MCF 10A (cell line): ENCODE measurements at regions of chr9 and their contacts with region 1.

Region 1: DNA sequence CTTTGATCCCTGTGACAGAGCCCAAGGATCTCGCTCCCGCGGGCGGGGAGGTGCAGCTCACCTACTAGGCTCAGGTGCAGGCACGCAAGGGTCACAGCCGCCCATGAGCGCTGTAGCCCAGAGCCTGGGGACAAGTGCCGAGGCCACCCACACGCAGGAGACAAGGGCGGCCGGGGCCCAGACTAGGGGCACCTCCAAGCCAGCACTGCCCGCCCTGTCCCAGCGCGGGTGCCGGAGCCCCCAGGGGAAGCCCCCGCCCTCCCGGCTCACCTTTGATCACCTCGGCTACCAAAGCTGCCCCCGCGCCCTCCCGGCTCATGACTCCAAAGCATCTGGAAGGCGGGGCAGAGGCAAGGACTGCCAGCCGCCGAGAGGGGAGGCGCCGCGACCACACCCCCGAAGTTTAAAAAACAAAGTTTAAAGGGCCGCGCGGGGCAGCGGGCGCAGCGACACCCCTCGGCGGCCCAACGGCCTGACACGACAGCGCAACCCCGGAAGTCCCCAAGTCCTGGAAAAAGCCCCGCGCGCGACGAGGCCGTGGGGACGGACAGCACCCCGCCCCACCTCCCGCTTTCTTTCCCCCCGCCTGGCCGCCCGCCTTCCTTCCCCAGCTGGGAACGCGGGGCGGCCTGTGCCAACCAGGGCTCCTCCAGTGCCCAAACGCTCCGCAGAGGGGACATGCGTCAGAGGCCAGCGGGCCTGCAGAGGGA is 53.0 kb downstream of the CDC14B start:
- DNase-seq: peak; percentile 63
- H3K4me3 Mint-ChIP-seq: peak overlapping the region; percentile 80
- H3K27ac Mint-ChIP-seq: peak overlapping the region; percentile 84
- H3K4me1 Mint-ChIP-seq: peaks cover 6% of the 10 kb centered on the region
- H3K27me3 Mint-ChIP-seq: no peaks in the 10 kb centered on the region
- CTCF ChIP-seq: peak; percentile 49

Region 2: DNA sequence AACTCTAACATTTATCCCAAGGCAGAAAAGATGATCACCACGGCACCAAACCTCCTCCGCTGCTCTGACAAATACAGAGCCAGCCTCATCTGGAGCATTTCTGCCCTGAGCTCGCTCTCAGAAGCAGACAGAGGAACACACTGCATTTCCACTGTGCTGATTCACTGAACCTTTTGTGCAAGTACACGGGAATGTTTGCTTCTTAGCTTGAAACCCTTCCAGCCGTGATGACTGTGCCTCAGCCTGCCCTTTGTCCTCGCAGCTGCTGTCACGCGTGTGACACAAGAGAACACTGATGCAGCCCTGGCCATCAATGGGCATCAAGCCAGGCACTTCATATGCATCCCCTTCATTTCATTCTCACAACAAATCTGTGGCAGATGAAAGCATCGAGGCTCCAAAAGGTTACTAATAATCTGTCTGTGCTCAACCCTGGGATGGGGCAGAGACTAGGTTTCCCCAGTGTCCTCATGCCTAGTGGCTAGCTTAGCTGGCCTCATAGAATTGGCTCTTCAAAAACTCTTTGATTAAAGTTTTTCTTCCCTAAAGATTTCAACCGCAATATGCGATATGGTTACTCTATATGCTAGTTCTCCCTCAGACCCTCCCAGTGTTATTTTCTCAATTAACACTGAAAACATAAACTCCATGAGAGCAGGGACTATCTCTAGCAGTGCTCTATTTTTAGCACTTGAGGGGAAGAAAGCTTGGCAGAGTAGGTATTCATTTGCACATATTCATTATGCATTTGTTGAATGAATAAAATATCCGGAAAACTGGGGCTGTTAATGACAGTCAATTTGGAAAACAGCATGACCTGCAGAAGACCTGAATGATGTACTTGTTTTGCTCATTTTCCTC is 45.7 kb after region 1 on chr9:
- CTCF ChIA-PET with region 1: interaction called, 8 read pairs
- POLR2A ChIA-PET with region 1: interaction called, 12 read pairs
- intact Hi-C with region 1: no loop called
- DNase-seq: peak; percentile 62
- H3K4me3 Mint-ChIP-seq: peak overlapping the region; percentile 13
- H3K27ac Mint-ChIP-seq: peak overlapping the region; percentile 23
- H3K4me1 Mint-ChIP-seq: peaks cover 22% of the 10 kb centered on the region
- H3K27me3 Mint-ChIP-seq: no peaks in the 10 kb centered on the region
- CTCF ChIP-seq: no peak

Region 3: DNA sequence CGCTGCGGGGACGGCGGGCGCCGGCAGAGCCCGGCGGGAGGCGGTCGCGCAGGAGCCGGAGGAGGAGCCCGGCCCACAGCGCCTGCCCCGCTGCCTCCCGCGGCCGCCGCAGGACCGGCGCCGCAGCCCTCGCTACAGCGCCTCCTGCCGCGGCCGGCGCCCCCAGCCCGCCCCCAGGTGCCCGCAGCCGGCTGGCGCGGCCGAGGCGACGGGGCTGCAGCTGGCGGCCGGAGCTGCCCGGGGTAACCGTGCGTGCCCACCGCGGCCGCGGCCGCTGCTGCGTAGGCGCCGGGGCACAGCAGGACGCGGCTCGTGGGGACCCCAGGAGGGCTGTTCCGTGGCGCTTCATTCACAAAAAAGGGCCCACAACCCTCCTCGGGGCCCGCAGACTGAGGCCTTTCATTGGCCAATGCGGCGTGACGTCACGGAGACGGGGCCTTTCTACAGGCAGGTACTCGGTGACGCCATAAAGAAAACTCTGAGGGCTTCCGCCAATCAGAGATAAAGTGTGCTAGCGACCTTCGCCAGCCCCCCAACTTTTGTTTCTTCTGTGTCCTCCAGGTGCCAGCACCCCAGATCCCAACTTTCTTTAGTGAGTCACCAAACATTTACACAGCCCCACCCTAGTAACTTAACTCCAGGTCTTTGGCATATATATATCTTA is 53.0 kb after region 1 on chr9 and contains the start of gene CDC14B:
- CTCF ChIA-PET with region 1: interaction called, 6 read pairs
- POLR2A ChIA-PET with region 1: interaction called, 11 read pairs
- intact Hi-C with region 1: loop called (anchors 1 kb)
- DNase-seq: peak; percentile 91
- H3K4me3 Mint-ChIP-seq: peak within 1 kb of the TSS; percentile 76
- H3K27ac Mint-ChIP-seq: no peak within 1 kb of the TSS
- H3K4me1 Mint-ChIP-seq: peaks cover 12% of the 10 kb centered on the region
- H3K27me3 Mint-ChIP-seq: no peaks in the 10 kb centered on the region
- CTCF ChIP-seq: peak; percentile 12
- total RNA-seq, gene CDC14B: 7.0 and 9.3 TPM in 2 replicates